Activated CD4-positive, alpha-beta memory T cell treated with anti-CD3 and anti-CD28 coated beads for 36 hours (primary cell): ENCODE measurements at regions of chr9 and their contacts with region 1.

Region 1: GRCh38 chr9:22008736-22009562 is at the start of gene CDKN2B:
- DNase-seq: peak; percentile 84
- H3K4me3 Mint-ChIP-seq: peak within 1 kb of the TSS; percentile 81
- H3K27ac Mint-ChIP-seq: no peak within 1 kb of the TSS
- H3K4me1 Mint-ChIP-seq: peaks cover 24% of the 10 kb centered on the region
- H3K27me3 Mint-ChIP-seq: peaks cover 54% of the 10 kb centered on the region
- total RNA-seq, gene CDKN2B: 0.05 to 0.10 TPM

Region 2: GRCh38 chr9:21802195-21803000 is 206.6 kb before region 1 on chr9 and contains the start of gene MTAP:
- CTCF ChIA-PET with region 1: interaction called, 14 read pairs
- POLR2A ChIA-PET with region 1: no interaction called
- intact Hi-C with region 1: no loop called
- DNase-seq: peak; percentile 83
- H3K4me3 Mint-ChIP-seq: peak within 1 kb of the TSS; percentile 98
- H3K27ac Mint-ChIP-seq: peak within 1 kb of the TSS; percentile 99
- H3K4me1 Mint-ChIP-seq: peaks cover 39% of the 10 kb centered on the region
- H3K27me3 Mint-ChIP-seq: peaks cover 7% of the 10 kb centered on the region
- total RNA-seq, gene MTAP: 55.6 to 62.3 TPM

Region 3: GRCh38 chr9:21974548-21975409 is 34.2 kb before region 1 on chr9:
- CTCF ChIA-PET with region 1: interaction called, 47 read pairs
- POLR2A ChIA-PET with region 1: no interaction called
- intact Hi-C with region 1: loop called (anchors 1 kb)
- DNase-seq: peak; percentile 70
- H3K4me3 Mint-ChIP-seq: peak overlapping the region; percentile 75
- H3K27ac Mint-ChIP-seq: no peak overlapping the region
- H3K4me1 Mint-ChIP-seq: peaks cover 13% of the 10 kb centered on the region
- H3K27me3 Mint-ChIP-seq: peaks cover 71% of the 10 kb centered on the region

Region 4: DNA sequence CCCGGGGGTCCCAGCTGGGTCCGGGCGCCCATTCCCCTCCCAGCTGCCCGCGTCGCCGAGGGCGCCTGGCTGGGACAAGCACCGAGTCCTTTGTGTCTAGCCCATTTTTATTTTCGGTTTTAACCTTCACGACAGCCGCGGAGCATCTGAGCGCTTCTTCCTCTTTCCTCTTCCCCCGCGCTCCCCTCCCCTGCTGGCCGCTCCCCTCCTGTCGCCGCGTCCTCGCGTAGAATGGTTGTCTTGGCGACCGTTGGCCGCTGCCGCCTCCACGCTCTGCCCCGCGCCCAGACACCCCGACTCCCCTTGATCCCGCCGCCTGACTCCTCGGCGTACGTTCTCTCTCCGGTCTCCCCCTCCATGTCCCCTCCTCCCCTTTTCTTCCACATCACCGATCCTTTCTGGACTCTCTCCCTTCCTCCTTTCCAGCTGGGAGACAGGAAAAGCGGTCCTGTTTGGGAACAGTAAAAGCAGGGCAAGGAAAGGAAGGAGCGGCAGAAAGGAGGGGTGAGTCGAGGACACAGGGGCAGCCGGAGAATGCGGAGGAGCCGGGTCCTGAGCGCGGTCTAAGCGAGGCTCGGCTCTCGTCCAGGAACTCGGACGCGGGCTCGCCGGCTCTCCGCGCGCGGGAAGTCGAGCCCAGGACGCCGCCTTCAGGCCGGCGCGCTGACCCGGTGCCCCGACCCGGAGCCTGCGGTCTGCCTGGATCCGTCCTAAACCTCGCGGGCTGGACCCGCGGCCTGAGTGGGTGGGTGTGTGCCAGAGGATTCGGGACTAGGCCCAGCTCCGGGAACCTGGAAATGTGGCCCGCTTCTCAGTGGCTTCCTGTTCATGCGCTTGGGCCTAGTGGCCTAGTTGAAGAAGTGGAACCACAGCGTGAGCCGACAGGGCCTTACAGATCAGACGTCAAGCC is 13.5 kb before region 1 on chr9:
- CTCF ChIA-PET with region 1: interaction called, 88 read pairs
- POLR2A ChIA-PET with region 1: interaction called, 3 read pairs
- intact Hi-C with region 1: loop called (anchors 1 kb)
- DNase-seq: peak; percentile 87
- H3K4me3 Mint-ChIP-seq: peak overlapping the region; percentile 86
- H3K27ac Mint-ChIP-seq: peak overlapping the region; percentile 44
- H3K4me1 Mint-ChIP-seq: peaks cover 11% of the 10 kb centered on the region
- H3K27me3 Mint-ChIP-seq: peaks cover 16% of the 10 kb centered on the region

Region 5: DNA sequence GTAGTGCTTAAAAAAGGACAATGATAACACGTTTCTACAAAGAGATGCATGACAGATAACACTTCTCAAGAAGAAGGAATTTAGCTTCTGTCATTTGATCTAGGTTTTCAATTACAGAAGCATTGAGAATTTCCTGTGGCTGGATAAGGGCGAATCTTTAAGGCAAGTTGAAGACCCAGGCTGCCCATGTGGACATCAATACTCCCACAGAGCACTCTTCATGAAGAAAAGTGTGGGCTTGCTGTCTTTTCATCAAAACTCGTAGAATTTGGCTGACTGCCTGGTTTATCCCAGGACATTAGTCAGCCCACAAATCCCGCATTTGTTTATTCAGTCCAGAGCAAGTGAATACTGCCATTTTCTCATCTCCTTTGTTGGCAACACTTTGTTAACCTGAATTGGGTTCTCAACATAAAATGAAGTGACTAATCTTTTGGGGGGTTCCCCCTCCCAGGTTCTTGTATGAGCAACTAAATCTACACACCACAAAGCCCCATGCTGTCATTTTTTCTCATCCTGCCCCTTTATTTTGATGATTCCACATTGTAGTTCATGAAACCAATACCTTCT is 43.5 kb after region 1 on chr9:
- CTCF ChIA-PET with region 1: interaction called, 20 read pairs
- POLR2A ChIA-PET with region 1: no interaction called
- intact Hi-C with region 1: no loop called
- DNase-seq: peak; percentile 50
- H3K4me3 Mint-ChIP-seq: no peak overlapping the region
- H3K27ac Mint-ChIP-seq: no peak overlapping the region
- H3K4me1 Mint-ChIP-seq: peaks cover 26% of the 10 kb centered on the region
- H3K27me3 Mint-ChIP-seq: peaks cover 12% of the 10 kb centered on the region

Region 6: DNA sequence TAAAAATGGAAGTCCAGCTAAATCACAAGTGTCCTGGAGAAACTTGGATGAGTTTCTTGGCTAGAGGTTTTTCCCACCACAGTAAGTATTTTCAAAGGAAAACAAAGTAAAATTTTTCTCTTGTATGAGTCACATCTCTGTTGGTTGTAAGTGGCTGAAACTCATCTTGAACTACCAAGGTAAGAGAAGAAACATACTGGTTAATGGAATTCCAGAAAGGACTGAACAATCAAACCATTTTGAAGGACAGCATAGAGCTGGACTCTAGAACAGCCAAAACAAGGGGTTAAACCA is 103.0 kb after region 1 on chr9:
- CTCF ChIA-PET with region 1: interaction called, 45 read pairs
- POLR2A ChIA-PET with region 1: no interaction called
- intact Hi-C with region 1: no loop called
- DNase-seq: no peak
- H3K4me3 Mint-ChIP-seq: no peak overlapping the region
- H3K27ac Mint-ChIP-seq: no peak overlapping the region
- H3K4me1 Mint-ChIP-seq: no peaks in the 10 kb centered on the region
- H3K27me3 Mint-ChIP-seq: peaks cover 43% of the 10 kb centered on the region

Region 7: DNA sequence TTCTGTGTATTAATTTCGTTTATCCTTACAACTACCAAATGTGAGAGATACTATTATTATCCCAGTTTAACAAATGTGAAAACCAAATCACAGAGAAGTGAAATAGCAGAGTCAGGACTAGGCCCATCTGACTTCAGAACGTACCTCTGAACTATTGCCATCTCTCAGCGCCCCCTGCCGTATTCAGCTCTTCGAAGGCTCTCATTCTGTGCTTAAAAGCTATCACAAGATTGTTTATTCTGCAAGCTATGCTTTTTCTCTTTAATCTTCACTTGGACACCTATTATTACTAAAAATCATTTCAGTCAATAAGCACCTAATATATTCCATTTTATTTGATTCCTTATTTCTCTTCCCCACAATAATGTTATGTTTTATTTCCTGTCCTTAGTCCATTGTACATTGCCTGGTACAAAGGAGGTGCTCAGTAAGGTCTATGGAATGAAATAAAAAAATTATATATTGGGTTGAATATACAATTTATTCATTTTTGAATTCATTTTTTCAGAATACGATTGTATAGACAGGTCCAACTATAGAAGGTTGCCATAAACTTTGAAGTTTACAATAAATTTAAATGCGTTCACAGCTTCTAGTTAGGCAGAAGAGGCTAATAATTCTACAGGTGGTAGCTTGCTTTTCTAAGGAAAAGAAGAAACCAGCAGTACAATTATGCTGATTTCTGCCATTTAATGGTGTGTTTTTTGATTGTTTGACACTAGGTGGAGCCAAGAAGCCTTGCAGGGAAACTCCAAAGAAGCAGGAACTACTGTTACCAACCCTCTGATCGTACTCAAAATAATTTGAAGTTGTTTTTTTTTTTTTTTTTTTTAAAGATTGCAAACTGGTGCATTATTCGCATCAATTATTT is 235.4 kb after region 1 on chr9:
- CTCF ChIA-PET with region 1: interaction called, 18 read pairs
- POLR2A ChIA-PET with region 1: no interaction called
- intact Hi-C with region 1: loop called (anchors 5 kb)
- DNase-seq: peak; percentile 48
- H3K4me3 Mint-ChIP-seq: no peak overlapping the region
- H3K27ac Mint-ChIP-seq: no peak overlapping the region
- H3K4me1 Mint-ChIP-seq: peaks cover 20% of the 10 kb centered on the region
- H3K27me3 Mint-ChIP-seq: peaks cover 16% of the 10 kb centered on the region